ENCODE measurements at regions of chr15 and their contacts with region 1.

Region 1: GRCh38 chr15:75738647-75739331 is 26.1 kb upstream of the CSPG4 start:
- DNase-seq: peak; percentile 49
- H3K4me3 ChIP-seq: peak overlapping the region; percentile 65 to 81 (median 80)
- H3K27ac ChIP-seq: peak overlapping the region; percentile 45 to 73 (median 63)
- H3K4me1 ChIP-seq: peaks cover 5 to 21% (median 8%) of the 10 kb centered on the region in 3 donors
- H3K27me3 ChIP-seq: peaks cover 0 to 5% (median 0%) of the 10 kb centered on the region in 4 donors
- CTCF ChIP-seq: no peak
- POLR2A ChIP-seq: no peak

Region 2: DNA sequence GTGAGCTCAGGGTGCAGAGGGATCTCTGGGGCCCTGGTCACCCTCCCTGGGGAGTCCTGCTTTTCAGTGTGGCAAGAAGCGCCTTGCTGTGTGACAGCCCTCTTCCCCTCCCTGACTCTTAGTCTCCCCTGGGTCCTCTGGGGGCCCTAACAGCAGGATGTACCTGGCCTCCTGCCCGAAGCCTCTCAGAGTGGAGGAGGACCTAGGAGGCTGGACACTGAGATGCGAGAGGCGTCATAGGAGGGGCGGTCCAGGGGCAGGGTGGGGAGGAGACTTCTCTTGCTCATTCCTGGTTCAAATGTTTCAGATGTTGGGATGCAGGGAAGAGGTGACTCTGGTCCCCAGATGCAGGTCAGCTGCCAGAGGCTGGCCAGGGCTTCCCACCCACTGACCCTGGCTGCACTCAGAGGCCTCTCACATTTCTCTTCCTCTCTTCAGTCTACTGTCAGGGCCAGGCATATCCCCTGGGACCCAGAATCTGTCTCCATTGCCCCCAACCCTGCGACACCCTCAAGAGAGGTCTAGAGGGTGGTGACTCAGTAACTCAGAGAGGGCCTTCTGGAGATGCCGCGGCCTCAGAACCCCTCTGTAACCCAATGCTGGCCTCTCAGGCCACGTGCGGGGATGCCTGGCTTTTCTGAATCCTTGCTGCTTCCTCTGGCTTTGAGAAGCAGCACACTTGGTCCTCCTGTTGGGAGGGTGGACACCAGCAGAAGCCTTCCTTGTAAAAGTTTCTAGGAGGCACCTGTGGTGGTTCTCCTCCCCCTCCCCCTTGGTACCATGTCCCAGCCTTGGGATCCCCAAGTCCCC is 65.2 kb before region 1 on chr15:
- intact Hi-C with region 1: no loop called
- DNase-seq: no peak
- H3K4me3 ChIP-seq: no peak overlapping the region
- H3K27ac ChIP-seq: peak overlapping the region; percentile 2 to 97 (median 78)
- H3K4me1 ChIP-seq: peaks cover 27 to 75% (median 29%) of the 10 kb centered on the region in 3 donors
- H3K27me3 ChIP-seq: no peaks in the 10 kb centered on the region
- CTCF ChIP-seq: no peak
- POLR2A ChIP-seq: no peak

Region 3: DNA sequence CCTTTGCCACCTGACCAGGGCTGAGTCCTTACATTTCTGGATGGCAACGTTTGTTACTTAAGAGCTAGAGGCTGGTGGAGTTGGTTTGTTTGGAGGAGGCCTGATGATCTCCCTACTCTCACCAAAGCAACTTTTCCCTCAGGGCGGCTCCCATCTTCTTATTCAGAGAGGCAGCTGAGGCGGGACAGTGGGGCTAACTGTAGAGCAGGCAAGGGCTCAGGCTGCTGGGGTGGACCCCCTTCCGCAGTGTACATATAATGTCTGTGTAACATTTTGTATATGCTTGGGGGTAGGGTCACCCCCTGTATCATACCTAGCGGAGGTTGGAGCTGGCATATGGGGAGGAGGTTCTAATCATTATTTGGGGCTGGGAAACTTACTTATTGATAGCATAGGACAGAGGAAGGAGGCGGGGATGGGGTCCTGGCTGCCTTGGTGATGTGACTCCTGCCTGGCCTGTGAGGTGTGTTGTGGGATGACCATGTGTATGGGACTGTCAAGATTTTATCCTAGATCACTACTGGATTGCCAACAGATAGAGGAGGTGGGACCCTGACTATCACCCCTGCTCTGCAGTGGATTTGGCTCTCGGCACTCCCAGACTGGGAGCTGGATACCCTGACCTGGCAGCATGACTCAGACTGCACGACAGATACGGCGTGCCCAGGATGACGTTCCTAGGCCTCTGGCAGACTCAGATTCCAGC is 52.0 kb after region 1 on chr15:
- intact Hi-C with region 1: loop called (anchors 10 kb)
- DNase-seq: no peak
- H3K4me3 ChIP-seq: no peak overlapping the region
- H3K27ac ChIP-seq: no peak overlapping the region
- H3K4me1 ChIP-seq: no peaks in the 10 kb centered on the region
- H3K27me3 ChIP-seq: peaks cover 0 to 33% (median 0%) of the 10 kb centered on the region in 4 donors
- CTCF ChIP-seq: no peak
- POLR2A ChIP-seq: no peak